Testis (tissue), 5 donors: ENCODE measurements at regions of chr1 and their contacts with region 1.

Region 1: GRCh38 chr1:23539698-23540266 is 8.7 kb upstream of the E2F2 start:
- DNase-seq: peak; percentile 92
- H3K4me3 ChIP-seq: no peak overlapping the region
- H3K27ac ChIP-seq: no peak overlapping the region
- H3K4me1 ChIP-seq: peaks cover 6% of the 10 kb centered on the region
- H3K27me3 ChIP-seq: no peaks in the 10 kb centered on the region
- CTCF ChIP-seq: peak; percentile 76 to 82 (median 78)
- POLR2A ChIP-seq: no peak

Region 2: DNA sequence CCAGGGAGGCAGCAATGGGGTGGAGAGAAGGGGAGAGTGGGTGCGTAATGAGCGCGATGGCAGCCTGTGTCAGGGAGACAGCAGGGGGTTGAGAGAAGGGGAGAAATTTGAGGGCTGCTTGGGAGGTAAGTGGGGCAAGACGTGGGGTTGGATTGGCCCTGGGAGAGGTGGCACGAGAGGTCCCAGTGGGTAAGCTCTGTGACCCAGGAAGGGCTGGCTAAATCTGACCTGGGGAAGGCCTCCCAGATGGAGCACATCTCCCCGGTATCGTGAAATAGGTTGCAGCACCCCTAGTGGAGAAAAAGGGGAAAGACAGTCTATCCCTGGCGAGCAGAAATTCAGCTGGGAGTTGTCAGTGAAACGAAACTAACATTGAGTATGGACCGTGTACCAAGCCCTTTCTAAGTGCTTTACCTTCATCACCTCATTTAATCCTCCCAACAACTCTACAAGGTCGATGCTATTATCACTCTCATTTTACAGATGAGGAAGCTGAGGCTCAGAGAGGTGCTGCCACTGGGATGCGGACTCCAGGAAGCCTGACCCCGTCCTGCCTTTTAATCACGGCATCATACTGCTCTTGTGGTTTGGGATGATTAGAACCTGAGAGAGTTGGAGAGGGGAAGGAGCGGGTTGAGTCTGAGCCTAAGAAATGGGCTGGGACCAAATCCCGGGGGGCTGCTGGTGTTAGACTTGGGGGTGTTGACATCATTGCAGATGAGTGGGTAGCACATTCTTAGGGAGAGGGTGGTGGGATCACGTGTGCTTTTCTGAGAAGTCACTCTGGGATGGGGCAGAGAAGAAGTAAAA is 95.3 kb after region 1 on chr1:
- intact Hi-C with region 1: loop called (anchors 5 kb)
- DNase-seq: peak; percentile 64
- H3K4me3 ChIP-seq: peak overlapping the region in 1 of 2 donors; percentile 27
- H3K27ac ChIP-seq: peak overlapping the region in 1 of 2 donors; percentile 18
- H3K4me1 ChIP-seq: peaks cover 16% of the 10 kb centered on the region
- H3K27me3 ChIP-seq: no peaks in the 10 kb centered on the region
- CTCF ChIP-seq: peak; percentile 66 to 93 (median 89)
- POLR2A ChIP-seq: no peak